Naive thymus-derived CD4-positive, alpha-beta T cell (primary cell): ENCODE measurements at regions of chr3 and their contacts with region 1.

Region 1: GRCh38 chr3:195442573-195443390 is at the start of gene ACAP2:
- DNase-seq: peak; percentile 96 to 100 (median 98)
- ATAC-seq: peak; percentile 96
- H3K4me3 ChIP-seq: peak within 1 kb of the TSS; percentile 91
- H3K4me3 Mint-ChIP-seq: peak within 1 kb of the TSS; percentile 94 to 98 (median 96)
- H3K27ac ChIP-seq: peak within 1 kb of the TSS; percentile 87
- H3K27ac Mint-ChIP-seq: peak within 1 kb of the TSS; percentile 84 to 95 (median 91)
- H3K4me1 ChIP-seq: peaks cover 24 to 38% of the 10 kb centered on the region in 2 donors
- H3K4me1 Mint-ChIP-seq: peaks cover 30 to 68% (median 55%) of the 10 kb centered on the region in 7 donors
- H3K27me3 ChIP-seq: no peaks in the 10 kb centered on the region
- H3K27me3 Mint-ChIP-seq: no peaks in the 10 kb centered on the region
- total RNA-seq, gene ACAP2: 68.1 to 111 (median 74.2) TPM

Region 2: GRCh38 chr3:194486540-194487288 is 956.1 kb before region 1 on chr3 and contains the start of gene ATP13A3:
- CTCF ChIA-PET with region 1: no interaction called
- POLR2A ChIA-PET with region 1: no interaction called
- intact Hi-C with region 1: loop called (anchors 2 kb)
- DNase-seq: peak; percentile 84 to 93 (median 91)
- ATAC-seq: peak; percentile 93
- H3K4me3 ChIP-seq: peak within 1 kb of the TSS; percentile 83
- H3K4me3 Mint-ChIP-seq: peak within 1 kb of the TSS; percentile 83 to 98 (median 93)
- H3K27ac ChIP-seq: peak within 1 kb of the TSS; percentile 82
- H3K27ac Mint-ChIP-seq: peak within 1 kb of the TSS; percentile 82 to 96 (median 94)
- H3K4me1 ChIP-seq: peaks cover 20 to 25% of the 10 kb centered on the region in 2 donors
- H3K4me1 Mint-ChIP-seq: peaks cover 41 to 60% (median 45%) of the 10 kb centered on the region in 7 donors
- H3K27me3 ChIP-seq: no peaks in the 10 kb centered on the region
- H3K27me3 Mint-ChIP-seq: no peaks in the 10 kb centered on the region
- total RNA-seq, gene ATP13A3: 46.5 to 81.8 (median 58.4) TPM

Region 3: GRCh38 chr3:194682694-194683310 is 760.0 kb before region 1 on chr3:
- CTCF ChIA-PET with region 1: no interaction called
- POLR2A ChIA-PET with region 1: no interaction called
- intact Hi-C with region 1: loop called in 1 of 2 experiments (anchors 5 kb)
- DNase-seq: peak; percentile 33 to 75 (median 60)
- ATAC-seq: peak; percentile 77
- H3K4me3 ChIP-seq: no peak overlapping the region
- H3K4me3 Mint-ChIP-seq: peak overlapping the region in 2 of 10 donors; percentile 12 to 25
- H3K27ac ChIP-seq: no peak overlapping the region
- H3K27ac Mint-ChIP-seq: peak overlapping the region in 1 of 9 donors; percentile 25
- H3K4me1 ChIP-seq: peaks cover 12 to 14% of the 10 kb centered on the region in 2 donors
- H3K4me1 Mint-ChIP-seq: peaks cover 10 to 41% (median 28%) of the 10 kb centered on the region in 7 donors
- H3K27me3 ChIP-seq: no peaks in the 10 kb centered on the region
- H3K27me3 Mint-ChIP-seq: peaks cover 0 to 37% (median 0%) of the 10 kb centered on the region in 5 donors

Region 4: DNA sequence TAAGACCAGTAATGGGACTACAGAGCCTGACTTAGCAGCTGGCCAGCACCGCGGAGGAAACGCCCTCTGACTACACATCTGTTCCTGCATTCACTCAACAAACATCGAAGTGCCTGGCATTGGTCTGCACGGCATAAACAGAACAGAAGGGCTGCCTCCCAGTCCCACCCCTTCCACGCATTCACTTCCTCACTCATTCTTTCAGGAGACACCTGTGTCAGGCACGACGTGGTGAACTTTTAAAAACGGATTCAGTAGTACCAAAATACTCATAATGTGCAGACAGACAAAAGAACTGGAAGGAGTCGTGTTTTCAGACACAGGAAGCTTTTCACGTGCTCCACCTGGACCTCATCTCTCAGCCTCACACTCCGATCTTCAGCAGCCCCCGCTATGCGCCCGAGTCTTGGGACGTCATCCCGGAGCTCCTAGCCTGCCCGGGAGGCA is 295.1 kb before region 1 on chr3:
- CTCF ChIA-PET with region 1: no interaction called
- POLR2A ChIA-PET with region 1: no interaction called
- intact Hi-C with region 1: loop called in 1 of 2 experiments (anchors 10 kb)
- DNase-seq: peak in 3 of 9 donors; percentile 4 to 15 (median 4)
- ATAC-seq: peak; percentile 72
- H3K4me3 ChIP-seq: peak overlapping the region; percentile 27
- H3K4me3 Mint-ChIP-seq: peak overlapping the region; percentile 37 to 96 (median 79)
- H3K27ac ChIP-seq: no peak overlapping the region
- H3K27ac Mint-ChIP-seq: peak overlapping the region in 5 of 9 donors; percentile 78 to 94 (median 84)
- H3K4me1 ChIP-seq: peaks cover 4 to 9% of the 10 kb centered on the region in 2 donors
- H3K4me1 Mint-ChIP-seq: peaks cover 13 to 42% (median 34%) of the 10 kb centered on the region in 7 donors
- H3K27me3 ChIP-seq: no peaks in the 10 kb centered on the region
- H3K27me3 Mint-ChIP-seq: peaks cover 0 to 15% (median 0%) of the 10 kb centered on the region in 5 donors

Region 5: DNA sequence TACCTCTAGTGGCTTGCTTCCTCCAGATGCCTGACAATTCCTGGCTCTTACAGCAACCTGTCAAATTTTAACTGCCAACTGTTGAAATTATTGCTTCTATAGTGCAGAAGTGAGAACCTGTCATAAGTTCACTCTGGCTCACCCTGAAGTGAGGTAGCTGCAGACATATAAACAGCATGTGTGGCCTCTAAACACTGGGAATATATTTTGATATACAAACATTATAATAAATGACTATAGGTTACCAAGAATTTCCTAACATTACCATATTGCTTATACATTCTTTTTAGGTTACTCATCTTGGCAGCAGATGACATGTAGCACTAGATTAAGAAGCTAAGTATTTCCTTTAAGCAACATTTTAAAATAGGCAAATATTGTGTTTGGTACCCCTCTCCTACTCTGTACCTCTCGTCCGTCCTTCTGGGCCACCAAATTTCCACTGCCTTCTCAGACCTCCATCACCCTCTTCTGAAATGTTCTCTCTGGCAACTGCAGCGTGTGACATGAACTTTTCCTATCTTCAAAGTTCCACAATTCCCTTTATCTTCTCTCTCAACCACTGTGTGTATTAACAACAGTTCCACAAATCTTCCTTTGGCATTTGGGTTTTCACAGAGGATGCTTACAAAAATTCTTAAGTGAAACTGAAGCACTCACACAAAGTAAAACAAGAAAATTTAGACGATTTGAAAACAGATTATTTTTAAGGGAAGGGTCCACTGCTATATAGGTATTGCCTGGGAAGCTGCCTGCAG is 156.5 kb before region 1 on chr3:
- CTCF ChIA-PET with region 1: no interaction called
- POLR2A ChIA-PET with region 1: no interaction called
- intact Hi-C with region 1: no loop called
- DNase-seq: no peak
- ATAC-seq: no peak
- H3K4me3 ChIP-seq: no peak overlapping the region
- H3K4me3 Mint-ChIP-seq: no peak overlapping the region
- H3K27ac ChIP-seq: no peak overlapping the region
- H3K27ac Mint-ChIP-seq: peak overlapping the region in 3 of 9 donors; percentile 29 to 87 (median 83)
- H3K4me1 ChIP-seq: no peaks in the 10 kb centered on the region
- H3K4me1 Mint-ChIP-seq: peaks cover 0 to 8% (median 3%) of the 10 kb centered on the region in 7 donors
- H3K27me3 ChIP-seq: no peaks in the 10 kb centered on the region
- H3K27me3 Mint-ChIP-seq: no peaks in the 10 kb centered on the region

Region 6: GRCh38 chr3:195425849-195426248 is 16.9 kb before region 1 on chr3:
- CTCF ChIA-PET with region 1: no interaction called
- POLR2A ChIA-PET with region 1: interaction called, 3 read pairs
- intact Hi-C with region 1: loop called in 1 of 2 experiments (anchors 2 kb)
- DNase-seq: no peak
- ATAC-seq: no peak
- H3K4me3 ChIP-seq: no peak overlapping the region
- H3K4me3 Mint-ChIP-seq: peak overlapping the region in 9 of 10 donors; percentile 2 to 54 (median 12)
- H3K27ac ChIP-seq: no peak overlapping the region
- H3K27ac Mint-ChIP-seq: peak overlapping the region in 6 of 9 donors; percentile 3 to 32 (median 8)
- H3K4me1 ChIP-seq: peaks cover 10 to 16% of the 10 kb centered on the region in 2 donors
- H3K4me1 Mint-ChIP-seq: peaks cover 13 to 81% (median 76%) of the 10 kb centered on the region in 7 donors
- H3K27me3 ChIP-seq: no peaks in the 10 kb centered on the region
- H3K27me3 Mint-ChIP-seq: no peaks in the 10 kb centered on the region

Region 7: GRCh38 chr3:195522254-195523023 is 79.7 kb after region 1 on chr3:
- CTCF ChIA-PET with region 1: interaction called, 3 read pairs
- POLR2A ChIA-PET with region 1: no interaction called
- intact Hi-C with region 1: loop called in 1 of 2 experiments (anchors 5 kb)
- DNase-seq: peak in 6 of 9 donors; percentile 19 to 56 (median 50)
- ATAC-seq: peak; percentile 64
- H3K4me3 ChIP-seq: no peak overlapping the region
- H3K4me3 Mint-ChIP-seq: peak overlapping the region in 4 of 10 donors; percentile 10 to 61 (median 35)
- H3K27ac ChIP-seq: peak overlapping the region; percentile 50
- H3K27ac Mint-ChIP-seq: peak overlapping the region in 8 of 9 donors; percentile 56 to 91 (median 82)
- H3K4me1 ChIP-seq: peaks cover 18 to 33% of the 10 kb centered on the region in 2 donors
- H3K4me1 Mint-ChIP-seq: peaks cover 18 to 64% (median 56%) of the 10 kb centered on the region in 7 donors
- H3K27me3 ChIP-seq: no peaks in the 10 kb centered on the region
- H3K27me3 Mint-ChIP-seq: no peaks in the 10 kb centered on the region

Region 8: DNA sequence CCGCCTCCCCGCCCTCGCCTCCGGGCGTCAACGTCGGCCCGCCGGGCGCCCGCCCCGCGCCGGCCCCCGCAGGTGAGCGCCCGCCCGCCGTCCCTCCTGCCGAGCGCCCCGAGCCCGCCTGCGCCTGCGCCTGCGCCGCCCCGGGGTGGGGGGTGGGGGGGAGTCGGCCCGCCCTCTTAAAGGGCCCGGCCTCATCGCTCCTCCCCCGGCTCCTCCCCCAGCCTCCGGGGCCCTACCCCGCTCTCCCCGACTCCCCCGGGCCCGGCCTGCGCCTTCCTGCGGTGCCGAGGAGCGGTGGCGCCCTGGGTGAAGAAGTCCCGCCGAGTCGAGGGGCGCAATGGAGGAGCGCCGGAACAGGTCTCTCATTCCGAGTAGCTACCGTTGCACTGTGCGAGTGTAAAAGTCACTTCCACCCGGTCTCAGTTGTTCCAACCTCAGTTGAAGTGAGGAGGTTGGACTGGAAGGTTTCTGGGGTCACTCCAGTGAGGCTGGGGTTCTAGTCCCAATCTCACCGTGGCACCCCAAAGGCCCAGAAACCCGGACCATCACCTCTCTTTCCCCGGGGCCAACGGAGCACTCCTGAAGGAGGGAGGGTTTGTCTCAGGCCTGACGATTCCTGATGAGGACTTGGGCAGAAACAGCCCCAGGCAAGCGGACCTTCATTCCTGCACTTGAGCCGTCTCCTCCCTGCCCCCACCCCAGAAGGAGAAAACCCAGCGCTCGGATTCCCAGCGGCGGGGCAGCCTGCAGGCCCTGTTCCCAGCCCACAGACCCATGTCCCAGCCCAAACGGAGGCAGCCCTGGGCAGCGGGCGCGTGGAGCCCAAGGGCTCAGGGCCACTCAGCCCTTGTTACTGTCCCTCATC is 467.1 kb after region 1 on chr3:
- CTCF ChIA-PET with region 1: no interaction called
- POLR2A ChIA-PET with region 1: no interaction called
- intact Hi-C with region 1: loop called in 1 of 2 experiments (anchors 5 kb)
- DNase-seq: peak; percentile 82 to 93 (median 87)
- ATAC-seq: peak; percentile 81
- H3K4me3 ChIP-seq: peak overlapping the region; percentile 54
- H3K4me3 Mint-ChIP-seq: peak overlapping the region; percentile 40 to 97 (median 70)
- H3K27ac ChIP-seq: peak overlapping the region; percentile 68
- H3K27ac Mint-ChIP-seq: peak overlapping the region in 6 of 9 donors; percentile 10 to 90 (median 68)
- H3K4me1 ChIP-seq: peaks cover 26 to 27% of the 10 kb centered on the region in 2 donors
- H3K4me1 Mint-ChIP-seq: peaks cover 25 to 39% (median 33%) of the 10 kb centered on the region in 7 donors
- H3K27me3 ChIP-seq: no peaks in the 10 kb centered on the region
- H3K27me3 Mint-ChIP-seq: no peaks in the 10 kb centered on the region